Activated T-helper 1 cell treated with anti-CD3 and anti-CD28 coated beads, Interleukin-12 subunit alpha, Interleukin-12 subunit beta, Interleukin-2, Interleukin-4 antibody, amounts not matched to agents 30 ng/mL and 10 ng/mL and 1 ng/mL, durations not matched to agents 14 hours and 24 hours and 36 hours (primary cell): ENCODE measurements at regions of chr11 and their contacts with region 1.

Region 1: GRCh38 chr11:34357701-34358257 is at the start of gene ABTB2:
- DNase-seq: peak; percentile 98
- H3K4me3 Mint-ChIP-seq: peak within 1 kb of the TSS; percentile 88
- H3K27ac Mint-ChIP-seq: peak within 1 kb of the TSS; percentile 77
- H3K4me1 Mint-ChIP-seq: peaks cover 39% of the 10 kb centered on the region
- H3K27me3 Mint-ChIP-seq: peaks cover 22% of the 10 kb centered on the region
- total RNA-seq, gene ABTB2: 14.1 and 14.5 TPM in 2 replicates

Region 2: DNA sequence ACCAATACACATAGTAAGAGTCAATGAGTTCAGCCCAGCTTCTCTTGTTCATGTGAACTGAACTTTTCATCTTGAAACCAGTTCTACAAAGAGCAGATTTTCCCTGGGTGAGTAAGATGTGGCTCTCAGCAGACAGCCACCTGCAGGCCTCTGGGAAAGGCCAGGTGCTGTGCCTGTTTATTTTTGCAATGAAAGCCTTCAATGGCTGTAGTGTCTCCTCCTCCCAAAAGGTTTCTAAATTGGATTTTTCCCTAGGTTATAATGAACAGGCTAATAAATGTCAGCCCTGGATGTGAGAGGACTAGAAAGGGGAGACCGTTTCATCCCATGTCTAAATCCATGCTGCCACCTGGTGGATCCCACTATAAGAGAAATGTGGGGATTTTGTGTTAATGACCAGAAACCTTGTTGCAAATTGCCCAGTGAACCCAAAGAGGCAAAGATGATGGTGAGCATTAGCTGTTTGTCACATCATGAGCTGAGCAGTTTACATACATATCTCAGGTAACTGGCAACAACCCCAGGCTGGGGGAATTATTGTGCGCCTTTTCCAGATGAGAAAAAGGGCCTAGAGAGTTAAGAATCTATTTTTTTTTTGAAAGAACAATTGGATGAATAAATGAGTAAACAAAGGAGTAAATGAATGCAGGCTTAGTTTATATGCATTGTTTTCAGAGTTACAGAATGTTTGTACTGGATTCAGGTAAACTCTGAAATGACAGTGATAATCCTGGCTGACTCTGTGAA is 669.9 kb before region 1 on chr11:
- intact Hi-C with region 1: no loop called
- DNase-seq: no peak
- H3K4me3 Mint-ChIP-seq: no peak overlapping the region
- H3K27ac Mint-ChIP-seq: no peak overlapping the region
- H3K4me1 Mint-ChIP-seq: no peaks in the 10 kb centered on the region
- H3K27me3 Mint-ChIP-seq: peaks cover 9% of the 10 kb centered on the region

Region 3: GRCh38 chr11:33700425-33701271 is 657.1 kb before region 1 on chr11 and contains the start of gene C11orf91:
- intact Hi-C with region 1: loop called (anchors 5 kb)
- DNase-seq: peak; percentile 94
- H3K4me3 Mint-ChIP-seq: peak within 1 kb of the TSS; percentile 84
- H3K27ac Mint-ChIP-seq: peak within 1 kb of the TSS; percentile 78
- H3K4me1 Mint-ChIP-seq: peaks cover 29% of the 10 kb centered on the region
- H3K27me3 Mint-ChIP-seq: peaks cover 22% of the 10 kb centered on the region
- total RNA-seq, gene C11orf91: 0.23 TPM in 1 of 2 replicates, not detected in the other

Region 4: GRCh38 chr11:33893711-33894397 is 463.9 kb before region 1 on chr11:
- intact Hi-C with region 1: loop called (anchors 2 kb)
- DNase-seq: peak; percentile 38
- H3K4me3 Mint-ChIP-seq: no peak overlapping the region
- H3K27ac Mint-ChIP-seq: peak overlapping the region; percentile 16
- H3K4me1 Mint-ChIP-seq: peaks cover 22% of the 10 kb centered on the region
- H3K27me3 Mint-ChIP-seq: peaks cover 64% of the 10 kb centered on the region

Region 5: DNA sequence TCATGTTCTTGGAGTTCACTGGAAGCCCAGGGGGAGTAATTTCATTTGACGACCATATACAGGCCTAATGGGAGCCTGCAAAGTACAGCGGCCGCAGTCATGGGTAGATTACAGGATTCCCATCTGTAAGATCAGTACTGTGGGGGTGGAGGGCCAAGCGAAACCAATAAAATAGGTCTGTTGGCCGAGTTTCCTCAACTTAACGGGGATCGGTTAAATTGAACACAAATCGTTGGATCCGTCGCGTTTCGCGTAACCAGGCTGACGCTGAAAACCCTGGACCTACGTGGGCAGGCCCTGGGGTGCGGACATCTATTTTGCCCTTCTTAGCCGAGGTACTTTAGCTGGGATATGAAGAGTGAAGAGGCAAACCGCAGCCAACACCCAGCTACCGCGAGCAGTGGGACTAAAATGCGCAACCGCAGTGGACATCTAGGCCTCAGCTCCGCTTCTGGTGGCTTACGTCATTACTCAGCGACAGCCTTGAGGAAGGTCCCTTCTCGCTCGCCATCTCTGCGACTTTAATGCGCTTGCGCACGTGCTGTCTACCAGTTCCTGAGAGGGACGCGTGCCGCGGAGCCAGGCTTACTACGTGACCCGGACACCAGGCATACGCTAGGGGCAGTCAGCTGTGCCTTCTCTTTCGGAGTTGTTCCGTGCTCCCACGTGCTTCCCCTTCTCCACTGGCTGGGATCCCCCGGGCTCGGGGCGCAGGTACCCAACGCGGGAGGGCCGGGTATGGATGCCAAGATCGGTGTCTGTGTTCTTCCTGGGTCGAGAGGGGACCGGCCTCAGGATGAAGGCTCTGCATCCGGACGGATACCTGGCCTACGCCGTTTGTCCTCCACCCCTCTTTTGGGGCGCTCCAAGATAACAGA is 252.5 kb before region 1 on chr11 and contains the start of gene NAT10:
- intact Hi-C with region 1: loop called (anchors 1 kb)
- DNase-seq: peak; percentile 97
- H3K4me3 Mint-ChIP-seq: peak within 1 kb of the TSS; percentile 95
- H3K27ac Mint-ChIP-seq: peak within 1 kb of the TSS; percentile 90
- H3K4me1 Mint-ChIP-seq: peaks cover 48% of the 10 kb centered on the region
- H3K27me3 Mint-ChIP-seq: no peaks in the 10 kb centered on the region
- total RNA-seq, gene NAT10: 157 and 158 TPM in 2 replicates

Region 6: GRCh38 chr11:34243726-34244464 is 113.9 kb before region 1 on chr11:
- intact Hi-C with region 1: loop called (anchors 1 kb)
- DNase-seq: peak; percentile 36
- H3K4me3 Mint-ChIP-seq: peak overlapping the region; percentile 65
- H3K27ac Mint-ChIP-seq: peak overlapping the region; percentile 71
- H3K4me1 Mint-ChIP-seq: peaks cover 94% of the 10 kb centered on the region
- H3K27me3 Mint-ChIP-seq: peaks cover 11% of the 10 kb centered on the region

Region 7: DNA sequence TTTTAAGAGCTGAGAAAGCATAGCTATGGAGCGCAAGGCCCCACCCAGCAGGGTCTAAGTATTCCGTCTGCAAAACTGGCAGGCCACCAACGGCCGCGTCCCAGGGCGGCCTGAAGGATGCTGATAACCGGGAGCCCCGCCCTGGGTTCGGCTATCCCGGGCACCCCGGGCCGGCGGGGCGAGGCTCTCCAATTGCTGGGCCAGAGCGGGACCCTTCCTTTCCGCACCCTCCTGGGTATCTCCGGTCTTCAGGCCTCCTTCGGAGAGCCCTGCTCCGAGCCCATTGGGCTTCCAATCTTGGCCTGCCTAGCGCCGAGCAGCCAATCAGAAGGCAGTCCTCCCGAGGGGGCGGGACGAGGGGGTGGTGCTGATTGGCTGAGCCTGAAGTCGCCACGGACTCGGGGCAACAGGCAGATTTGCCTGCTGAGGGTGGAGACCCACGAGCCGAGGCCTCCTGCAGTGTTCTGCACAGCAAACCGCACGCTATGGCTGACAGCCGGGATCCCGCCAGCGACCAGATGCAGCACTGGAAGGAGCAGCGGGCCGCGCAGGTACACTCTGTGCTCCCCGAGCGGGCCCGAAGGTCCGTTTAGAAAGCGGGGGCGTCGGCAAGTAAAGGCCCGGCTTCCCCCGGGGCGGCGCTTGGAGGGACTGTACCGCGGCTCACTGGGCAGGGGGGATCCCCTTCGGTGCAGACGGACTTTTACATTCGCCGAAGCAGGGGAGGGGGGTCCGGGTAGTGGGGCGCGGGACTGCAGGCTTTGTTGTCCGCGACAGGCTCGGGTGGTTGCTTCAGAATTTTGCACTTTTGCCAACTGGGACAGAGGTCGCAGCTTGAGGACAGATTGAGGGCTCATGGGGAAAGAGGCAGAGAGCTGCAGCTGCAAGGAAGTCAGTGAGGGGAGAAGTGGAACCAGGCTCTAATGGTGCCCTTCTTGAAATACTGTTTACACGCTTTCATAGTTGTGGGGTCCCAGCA is 81.0 kb after region 1 on chr11 and contains the start of gene CAT:
- intact Hi-C with region 1: loop called (anchors 1 kb)
- DNase-seq: peak; percentile 97
- H3K4me3 Mint-ChIP-seq: peak within 1 kb of the TSS; percentile 93
- H3K27ac Mint-ChIP-seq: peak within 1 kb of the TSS; percentile 92
- H3K4me1 Mint-ChIP-seq: peaks cover 26% of the 10 kb centered on the region
- H3K27me3 Mint-ChIP-seq: no peaks in the 10 kb centered on the region
- total RNA-seq, gene CAT: 19.1 and 19.9 TPM in 2 replicates